Mammary epithelial cell (primary cell): ENCODE measurements at regions of chr21 and their contacts with region 1.

Region 1: DNA sequence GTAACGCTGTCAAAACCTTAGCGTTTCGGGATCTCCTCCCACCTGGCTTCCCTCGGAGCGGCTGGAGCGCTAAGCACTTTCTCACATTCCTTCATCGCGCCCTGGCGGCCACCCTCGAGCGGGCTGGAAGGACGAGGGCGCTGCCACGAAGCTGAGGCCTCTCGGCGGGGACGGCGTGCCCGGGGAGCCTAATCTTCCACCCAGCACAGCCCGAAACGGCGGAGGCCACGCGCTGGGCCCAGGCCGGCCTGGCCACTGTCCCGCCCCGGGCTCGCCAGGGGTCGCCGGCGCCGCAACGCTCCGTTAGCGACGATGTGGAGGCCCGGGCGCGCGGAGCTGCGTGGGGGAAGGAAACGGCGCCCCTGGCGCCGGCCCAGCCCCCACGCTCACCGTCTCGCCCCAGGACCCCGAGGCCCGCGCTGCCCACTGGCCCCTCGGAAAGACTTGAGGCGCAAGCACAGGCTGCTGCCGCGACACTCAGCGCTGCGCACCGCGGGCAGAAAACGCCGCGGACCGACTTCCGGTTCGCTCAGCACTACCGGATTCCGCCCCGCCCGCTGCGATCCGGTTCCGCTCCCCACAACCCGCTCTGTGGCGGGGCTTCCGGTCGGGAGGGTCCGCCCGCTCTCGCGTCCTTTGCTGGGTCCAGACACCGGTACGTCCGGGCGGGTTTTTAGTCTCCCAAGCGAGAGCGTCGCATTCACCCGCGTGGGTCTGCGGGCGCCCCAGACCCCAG is at the start of gene YBEY:
- DNase-seq: peak; percentile 91
- H3K4me3 ChIP-seq: peak within 1 kb of the TSS; percentile 73 to 90 (median 76)
- H3K27ac ChIP-seq: peak within 1 kb of the TSS; percentile 70
- H3K4me1 ChIP-seq: peaks cover 25% of the 10 kb centered on the region
- H3K27me3 ChIP-seq: no peaks in the 10 kb centered on the region
- CTCF ChIP-seq: peak; percentile 13 to 48
- total RNA-seq, gene YBEY: 9.0 to 12.3 TPM

Region 2: GRCh38 chr21:46228345-46229051 is 57.4 kb before region 1 on chr21 and contains the start of gene LSS:
- CTCF ChIA-PET with region 1: no interaction called
- dilution Hi-C with region 1: no loop called
- in situ Hi-C with region 1: no loop called
- intact Hi-C with region 1: loop called (anchors 2 kb)
- DNase-seq: peak; percentile 96
- H3K4me3 ChIP-seq: peak within 1 kb of the TSS; percentile 93 to 94 (median 94)
- H3K27ac ChIP-seq: peak within 1 kb of the TSS; percentile 87
- H3K4me1 ChIP-seq: peaks cover 25% of the 10 kb centered on the region
- H3K27me3 ChIP-seq: no peaks in the 10 kb centered on the region
- CTCF ChIP-seq: no peak
- total RNA-seq, gene LSS: 69.2 to 126 TPM

Region 3: GRCh38 chr21:46243960-46244361 is 42.0 kb before region 1 on chr21:
- CTCF ChIA-PET with region 1: no interaction called
- dilution Hi-C with region 1: loop called (anchors 5 kb)
- in situ Hi-C with region 1: no loop called
- intact Hi-C with region 1: no loop called
- DNase-seq: no peak
- H3K4me3 ChIP-seq: no peak overlapping the region
- H3K27ac ChIP-seq: no peak overlapping the region
- H3K4me1 ChIP-seq: no peaks in the 10 kb centered on the region
- H3K27me3 ChIP-seq: no peaks in the 10 kb centered on the region
- CTCF ChIP-seq: no peak

Region 4: GRCh38 chr21:46307625-46308024 is 21.7 kb after region 1 on chr21:
- CTCF ChIA-PET with region 1: no interaction called
- dilution Hi-C with region 1: no loop called
- in situ Hi-C with region 1: no loop called
- intact Hi-C with region 1: no loop called
- DNase-seq: peak; percentile 73
- H3K4me3 ChIP-seq: no peak overlapping the region
- H3K27ac ChIP-seq: peak overlapping the region; percentile 28
- H3K4me1 ChIP-seq: peaks cover 9% of the 10 kb centered on the region
- H3K27me3 ChIP-seq: no peaks in the 10 kb centered on the region
- CTCF ChIP-seq: no peak

Region 5: DNA sequence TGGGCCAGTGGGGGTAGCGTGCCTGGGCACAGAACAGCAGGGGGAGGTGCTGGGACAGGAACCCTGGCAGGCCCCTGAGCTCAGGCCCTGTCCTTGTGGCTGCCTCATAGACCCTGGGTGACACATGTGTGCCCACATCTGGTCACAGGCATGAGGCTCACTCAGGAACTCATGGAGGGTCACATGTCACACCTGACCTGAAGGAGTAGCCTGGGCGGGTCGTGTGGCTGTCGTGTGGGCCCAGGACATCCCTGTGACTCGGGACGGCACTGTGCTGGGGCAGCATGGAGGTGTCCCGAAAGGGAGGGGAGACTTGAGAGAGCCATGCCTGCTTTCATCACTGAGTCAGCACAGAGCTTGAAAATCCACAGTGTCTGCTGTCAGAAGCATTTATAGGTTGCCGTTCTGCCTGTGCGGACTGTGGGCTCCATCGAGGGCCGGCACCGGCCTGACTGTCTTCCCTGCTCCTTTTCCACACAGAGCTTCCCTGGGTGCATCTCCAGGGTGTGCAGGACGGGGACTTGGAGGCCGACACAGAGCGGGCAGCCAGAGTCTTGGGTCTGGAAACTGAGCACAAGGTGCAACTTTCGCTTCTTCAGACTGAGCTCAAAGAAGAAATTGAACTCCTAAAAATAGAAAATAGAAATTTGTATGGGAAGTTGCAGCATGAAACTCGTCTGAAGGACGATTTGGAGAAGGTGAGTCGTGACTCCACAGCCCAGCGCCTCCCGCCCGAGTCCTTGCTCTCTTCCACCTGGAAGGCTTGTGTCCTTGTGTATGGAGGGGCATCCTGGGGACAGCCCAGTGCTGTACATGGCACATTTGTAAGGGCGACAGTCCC is 70.8 kb after region 1 on chr21:
- CTCF ChIA-PET with region 1: no interaction called
- dilution Hi-C with region 1: no loop called
- in situ Hi-C with region 1: no loop called
- intact Hi-C with region 1: no loop called
- DNase-seq: no peak
- H3K4me3 ChIP-seq: no peak overlapping the region
- H3K27ac ChIP-seq: no peak overlapping the region
- H3K4me1 ChIP-seq: no peaks in the 10 kb centered on the region
- H3K27me3 ChIP-seq: no peaks in the 10 kb centered on the region
- CTCF ChIP-seq: no peak